CD8-positive, alpha-beta memory T cell (primary cell): ENCODE measurements at regions of chr11 and their contacts with region 1.

Region 1: DNA sequence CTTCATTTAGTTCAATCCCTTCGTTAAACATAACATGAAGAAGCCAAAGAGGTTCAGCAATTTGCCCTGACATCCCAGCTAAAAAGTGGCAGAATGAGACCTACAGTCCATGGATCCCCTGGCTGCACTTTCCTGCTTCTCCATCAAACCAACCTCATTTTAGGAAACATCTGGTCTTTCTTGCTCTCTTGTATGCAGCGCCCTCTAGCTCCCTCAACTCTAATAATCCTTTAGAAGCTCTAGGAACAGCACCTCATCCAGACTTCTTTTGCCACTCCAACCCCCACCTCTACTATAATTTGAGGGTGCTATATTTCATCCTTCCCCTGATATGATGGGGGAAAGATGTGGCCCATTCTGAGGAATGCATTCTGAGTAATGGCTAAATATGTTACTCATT is 7.4 kb downstream of the CNTF start:
- DNase-seq: peak in 1 of 5 donors; percentile 16
- H3K4me3 ChIP-seq: no peak overlapping the region
- H3K4me3 Mint-ChIP-seq: no peak overlapping the region
- H3K27ac ChIP-seq: no peak overlapping the region
- H3K27ac Mint-ChIP-seq: peak overlapping the region in 4 of 8 donors; percentile 8 to 42 (median 25)
- H3K4me1 ChIP-seq: no peaks in the 10 kb centered on the region
- H3K4me1 Mint-ChIP-seq: no peaks in the 10 kb centered on the region
- H3K27me3 ChIP-seq: no peaks in the 10 kb centered on the region
- H3K27me3 Mint-ChIP-seq: peaks cover 0 to 1% of the 10 kb centered on the region in 2 donors

Region 2: GRCh38 chr11:58597486-58598144 is 32.2 kb before region 1 on chr11:
- CTCF ChIA-PET with region 1: no interaction called
- POLR2A ChIA-PET with region 1: no interaction called
- DNase-seq: no peak
- H3K4me3 ChIP-seq: no peak overlapping the region
- H3K4me3 Mint-ChIP-seq: peak overlapping the region in 1 of 7 donors; percentile 47
- H3K27ac ChIP-seq: no peak overlapping the region
- H3K27ac Mint-ChIP-seq: peak overlapping the region in 5 of 8 donors; percentile 10 to 33 (median 21)
- H3K4me1 ChIP-seq: peaks cover 38% of the 10 kb centered on the region
- H3K4me1 Mint-ChIP-seq: peaks cover 81 to 98% (median 96%) of the 10 kb centered on the region in 3 donors
- H3K27me3 ChIP-seq: no peaks in the 10 kb centered on the region
- H3K27me3 Mint-ChIP-seq: no peaks in the 10 kb centered on the region

Region 3: DNA sequence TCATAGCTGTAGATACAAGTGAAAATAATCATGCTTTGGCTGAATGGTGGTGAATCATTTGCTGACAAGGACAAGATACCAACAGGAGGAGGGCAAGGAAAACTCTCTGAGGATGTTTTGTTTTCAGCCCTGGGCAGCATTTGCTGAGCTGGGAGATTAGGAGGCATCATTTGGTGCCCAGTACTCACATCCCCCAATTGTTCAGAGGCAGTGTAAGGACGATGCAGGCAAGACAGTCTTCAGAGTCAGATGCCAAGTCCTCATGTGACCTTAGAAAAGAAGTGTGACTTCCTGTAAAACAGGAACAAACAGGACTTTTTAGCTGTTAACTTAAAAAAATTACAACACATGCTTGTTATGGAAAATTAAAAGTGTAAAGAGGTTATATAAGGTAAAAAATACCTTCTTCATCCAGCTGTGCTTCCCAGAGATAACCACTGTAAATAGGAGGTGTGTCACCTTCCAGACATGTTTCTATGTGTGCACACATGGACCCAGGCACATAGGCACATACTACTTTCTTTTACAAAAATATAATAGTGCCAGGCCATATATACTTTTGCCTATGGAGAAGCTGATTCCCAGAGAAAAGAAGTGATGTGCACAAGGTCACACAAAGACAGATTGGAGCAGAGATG is 10.6 kb after region 1 on chr11:
- CTCF ChIA-PET with region 1: interaction called, 20 read pairs
- POLR2A ChIA-PET with region 1: interaction called, 3 read pairs
- DNase-seq: peak in 2 of 5 donors; percentile 18
- H3K4me3 ChIP-seq: no peak overlapping the region
- H3K4me3 Mint-ChIP-seq: peak overlapping the region in 6 of 7 donors; percentile 27 to 49 (median 36)
- H3K27ac ChIP-seq: no peak overlapping the region
- H3K27ac Mint-ChIP-seq: peak overlapping the region in 7 of 8 donors; percentile 13 to 80 (median 74)
- H3K4me1 ChIP-seq: peaks cover 19% of the 10 kb centered on the region
- H3K4me1 Mint-ChIP-seq: peaks cover 19 to 23% (median 22%) of the 10 kb centered on the region in 3 donors
- H3K27me3 ChIP-seq: no peaks in the 10 kb centered on the region
- H3K27me3 Mint-ChIP-seq: no peaks in the 10 kb centered on the region